GM10248 (cell line): ENCODE measurements at regions of chr17 and their contacts with region 1.

Region 1: DNA sequence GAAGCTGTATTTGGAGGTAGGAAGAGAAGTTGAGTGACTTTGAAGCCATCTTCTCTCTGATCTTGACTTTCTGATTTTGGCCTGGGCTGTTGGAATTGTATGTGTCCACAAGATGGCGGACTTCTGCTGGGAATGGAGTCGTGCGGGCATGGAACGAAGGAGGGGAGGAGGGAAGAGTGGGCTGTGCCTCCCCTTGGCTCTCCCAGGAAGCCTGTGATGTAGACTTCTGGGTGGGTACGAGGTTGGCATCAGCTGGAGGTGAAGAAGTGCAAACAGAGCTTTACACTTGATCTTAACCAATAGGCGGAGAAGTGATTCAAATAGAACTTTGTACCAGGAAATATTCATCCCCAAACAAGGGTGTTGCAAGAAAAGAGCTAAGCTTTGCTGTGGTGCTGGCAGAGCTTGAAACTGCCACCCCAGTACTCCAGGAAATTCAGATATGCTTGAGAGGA is 7.4 kb upstream of the TMEM220 start:
- DNase-seq: peak; percentile 40
- CTCF ChIP-seq: peak; percentile 72

Region 2: DNA sequence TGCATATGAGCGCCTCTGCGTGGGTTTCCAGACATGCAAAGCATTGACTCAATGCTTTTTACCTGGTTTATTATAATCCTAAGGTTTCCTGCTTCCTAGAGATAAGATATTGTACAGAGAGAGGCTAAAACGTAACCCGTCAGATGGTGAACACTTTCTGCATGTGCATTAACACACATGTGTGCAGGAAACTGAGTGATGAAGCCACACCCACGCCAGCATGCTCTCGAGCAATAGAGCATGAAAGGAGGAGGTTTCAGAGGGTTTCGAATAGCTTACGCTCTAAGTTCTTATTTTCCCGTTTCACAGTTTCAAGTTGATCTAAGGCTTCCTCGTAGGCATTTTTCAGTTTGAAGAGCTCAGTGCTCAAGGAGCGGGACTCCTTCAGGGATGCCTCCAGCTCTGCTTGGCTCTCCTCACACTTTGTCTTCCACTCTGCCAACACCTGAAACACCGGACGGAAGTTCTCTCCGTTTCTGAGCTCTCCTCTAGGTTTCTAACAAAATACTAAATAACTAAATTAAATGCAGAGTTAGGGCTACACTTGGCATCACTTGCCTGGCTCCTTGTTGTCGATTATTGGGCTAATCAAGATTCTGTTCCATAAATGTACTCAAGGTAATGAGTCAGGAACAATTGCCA is 103.3 kb before region 1 on chr17:
- CTCF ChIA-PET with region 1: no interaction called
- POLR2A ChIA-PET with region 1: no interaction called
- DNase-seq: peak; percentile 78
- CTCF ChIP-seq: no peak

Region 3: GRCh38 chr17:10748531-10749163 is 11.5 kb after region 1 on chr17:
- CTCF ChIA-PET with region 1: interaction called, 19 read pairs
- POLR2A ChIA-PET with region 1: no interaction called
- DNase-seq: no peak
- CTCF ChIP-seq: no peak

Region 4: DNA sequence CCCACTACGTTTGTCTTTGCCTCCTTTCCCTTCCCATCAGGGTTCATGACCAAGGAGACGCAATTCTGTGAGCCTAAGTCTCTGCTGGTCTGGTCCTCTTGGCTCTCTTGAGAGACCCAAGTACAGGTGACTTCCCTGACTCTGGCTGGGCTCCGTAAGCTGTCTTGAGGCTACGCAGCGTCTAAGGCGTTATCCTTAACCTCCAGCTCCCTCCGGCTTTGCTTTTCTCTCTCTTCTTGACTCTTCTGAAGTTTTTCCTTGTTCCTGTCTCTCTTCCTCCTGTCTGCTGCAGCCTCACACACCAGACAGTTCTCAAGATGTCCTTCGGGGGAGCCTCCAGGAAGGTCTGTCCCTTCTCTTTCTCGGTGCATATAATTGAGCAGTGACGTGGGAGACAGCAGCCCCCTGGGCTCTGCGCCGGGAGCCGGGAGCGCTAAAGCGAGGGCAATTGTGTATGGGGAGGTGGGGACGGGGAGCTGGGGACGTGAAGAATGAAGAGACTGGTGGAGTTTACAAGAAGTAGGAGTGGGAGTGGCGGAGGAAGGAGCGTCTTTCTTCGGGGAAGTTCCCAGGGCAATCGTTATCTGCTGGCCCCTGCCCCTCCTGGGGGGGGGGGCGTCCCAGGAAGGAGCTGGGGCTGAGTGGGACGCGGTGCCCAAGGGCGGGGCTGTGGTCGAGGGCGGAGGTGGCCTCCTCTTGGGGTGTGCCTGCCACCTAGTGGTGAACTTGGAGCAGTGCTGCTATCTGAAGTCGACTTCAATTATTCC is 107.6 kb after region 1 on chr17:
- CTCF ChIA-PET with region 1: interaction called, 28 read pairs
- POLR2A ChIA-PET with region 1: no interaction called
- DNase-seq: peak; percentile 86
- CTCF ChIP-seq: peak; percentile 91